ENCODE measurements at regions of chr17 and their contacts with region 1.

Region 1: DNA sequence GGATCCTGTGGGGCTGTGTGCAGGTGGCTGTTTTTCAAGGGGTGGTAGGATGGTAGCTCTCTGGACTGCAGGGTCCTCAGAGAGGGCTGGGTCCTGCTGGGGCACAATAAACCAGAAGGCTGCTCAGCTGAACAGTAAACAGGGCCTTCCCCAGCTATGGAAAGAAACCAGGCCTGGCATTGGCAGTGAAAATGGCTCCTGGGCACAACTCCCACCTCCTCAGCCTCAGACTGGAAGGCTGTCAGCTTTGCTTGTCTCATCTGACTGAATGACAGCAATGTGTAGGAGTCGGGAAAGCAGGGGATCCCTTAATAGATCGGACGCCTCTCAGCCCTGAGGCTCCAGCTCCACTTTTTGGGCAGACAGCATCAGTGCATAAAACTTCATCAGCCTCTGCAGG is 59.8 kb upstream of the NLRP1 start:
- DNase-seq: no peak
- ATAC-seq: no peak
- H3K4me3 ChIP-seq: no peak overlapping the region
- H3K27ac ChIP-seq: no peak overlapping the region
- H3K4me1 ChIP-seq: no peaks in the 10 kb centered on the region
- H3K27me3 ChIP-seq: peaks cover 0 to 27% (median 0%) of the 10 kb centered on the region in 9 donors
- CTCF ChIP-seq: no peak
- POLR2A ChIP-seq: no peak

Region 2: GRCh38 chr17:5686074-5686635 is 42.1 kb after region 1 on chr17:
- intact Hi-C with region 1: loop called in 1 of 10 experiments (anchors 5 kb)
- DNase-seq: no peak
- ATAC-seq: no peak
- H3K4me3 ChIP-seq: no peak overlapping the region
- H3K27ac ChIP-seq: no peak overlapping the region
- H3K4me1 ChIP-seq: no peaks in the 10 kb centered on the region
- H3K27me3 ChIP-seq: peaks cover 0 to 16% (median 0%) of the 10 kb centered on the region in 9 donors
- CTCF ChIP-seq: no peak
- POLR2A ChIP-seq: no peak